ENCODE measurements at regions of chr5 and their contacts with region 1.

Region 1: GRCh38 chr5:36507332-36507952 is 99.0 kb upstream of the SLC1A3 start:
- DNase-seq: no peak
- H3K4me3 ChIP-seq: no peak overlapping the region
- H3K27me3 ChIP-seq: peaks cover 3% of the 10 kb centered on the region
- CTCF ChIP-seq: peak; percentile 91

Region 2: GRCh38 chr5:36521838-36522745 is 14.7 kb after region 1 on chr5:
- CTCF ChIA-PET with region 1: interaction called, 11 read pairs
- POLR2A ChIA-PET with region 1: no interaction called
- DNase-seq: no peak
- H3K4me3 ChIP-seq: no peak overlapping the region
- H3K27me3 ChIP-seq: peaks cover 2% of the 10 kb centered on the region
- CTCF ChIP-seq: no peak

Region 3: GRCh38 chr5:36561601-36562000 is 54.2 kb after region 1 on chr5:
- CTCF ChIA-PET with region 1: no interaction called
- POLR2A ChIA-PET with region 1: no interaction called
- DNase-seq: no peak
- H3K4me3 ChIP-seq: no peak overlapping the region
- H3K27me3 ChIP-seq: no peaks in the 10 kb centered on the region
- CTCF ChIP-seq: no peak

Region 4: GRCh38 chr5:36690041-36690961 is 182.9 kb after region 1 on chr5:
- CTCF ChIA-PET with region 1: interaction called, 28 read pairs
- POLR2A ChIA-PET with region 1: no interaction called
- DNase-seq: no peak
- H3K4me3 ChIP-seq: peak overlapping the region; percentile 48
- H3K27me3 ChIP-seq: no peaks in the 10 kb centered on the region
- CTCF ChIP-seq: peak; percentile 96

Region 5: DNA sequence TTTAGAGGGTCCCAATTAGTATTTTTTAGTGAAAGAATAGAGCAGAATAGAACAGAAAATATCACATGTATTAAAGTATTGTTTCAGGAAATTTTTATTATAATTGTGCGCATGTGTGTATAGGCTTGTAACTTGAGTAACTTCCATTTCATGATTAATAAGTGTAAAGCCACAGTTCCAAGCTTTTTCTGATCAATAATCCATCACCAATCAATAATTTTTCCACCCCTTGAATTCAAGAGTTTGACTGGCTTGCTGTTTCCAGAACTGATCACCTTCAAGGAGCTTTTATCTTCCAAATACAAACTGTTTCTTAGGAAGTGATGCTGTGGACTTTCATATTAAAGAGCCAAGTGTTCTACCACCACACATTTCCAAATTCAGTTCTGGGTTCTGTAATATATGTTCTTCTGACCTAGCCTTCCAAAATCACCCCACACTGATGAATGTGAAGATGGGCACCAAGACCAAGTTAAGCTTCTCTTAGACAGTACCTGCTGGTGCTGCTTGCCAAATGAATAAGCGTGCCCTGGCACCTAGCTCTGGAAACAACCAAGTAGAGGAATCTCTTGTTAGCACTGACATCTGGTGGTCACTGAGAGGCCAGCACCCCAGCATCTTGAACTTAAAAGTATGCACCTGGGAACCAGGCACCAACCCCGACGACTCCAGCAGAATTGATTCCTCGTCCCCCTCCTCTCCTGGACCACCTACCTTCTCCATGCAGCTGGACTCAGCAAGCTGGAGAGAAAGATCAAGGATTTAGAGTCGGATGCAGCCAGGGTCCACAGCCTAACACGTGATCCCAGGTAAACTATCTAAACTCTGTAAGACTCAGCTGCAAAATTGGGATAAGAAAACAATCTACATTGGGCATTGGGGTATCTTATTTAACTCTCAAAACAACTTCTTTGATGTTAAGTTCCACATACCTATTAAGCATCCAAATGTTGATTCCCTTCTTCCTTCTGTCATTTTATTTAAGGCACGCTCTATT is 188.5 kb after region 1 on chr5:
- CTCF ChIA-PET with region 1: interaction called, 28 read pairs
- POLR2A ChIA-PET with region 1: no interaction called
- DNase-seq: no peak
- H3K4me3 ChIP-seq: no peak overlapping the region
- H3K27me3 ChIP-seq: peaks cover 4% of the 10 kb centered on the region; the same call in 1 of the 2 replicates
- CTCF ChIP-seq: peak; percentile 86

Region 6: GRCh38 chr5:36836831-36837230 is 329.4 kb after region 1 on chr5:
- CTCF ChIA-PET with region 1: no interaction called
- POLR2A ChIA-PET with region 1: no interaction called
- DNase-seq: no peak
- H3K4me3 ChIP-seq: no peak overlapping the region
- H3K27me3 ChIP-seq: no peaks in the 10 kb centered on the region; the same call in 1 of the 2 replicates
- CTCF ChIP-seq: no peak

Measured in BJ (cell line).